CD14-positive monocyte (primary cell): ENCODE measurements at regions of chr14 and their contacts with region 1.

Region 1: GRCh38 chr14:61252369-61253063 is 28.6 kb downstream of the TMEM30B start:
- DNase-seq: peak; percentile 60 to 65 (median 63)
- H3K4me3 ChIP-seq: no peak overlapping the region
- H3K4me3 Mint-ChIP-seq: no peak overlapping the region
- H3K27ac ChIP-seq: no peak overlapping the region
- H3K27ac Mint-ChIP-seq: no peak overlapping the region
- H3K4me1 ChIP-seq: peaks cover 12 to 13% of the 10 kb centered on the region in 2 donors
- H3K4me1 Mint-ChIP-seq: peaks cover 22% of the 10 kb centered on the region
- H3K27me3 ChIP-seq: no peaks in the 10 kb centered on the region
- H3K27me3 Mint-ChIP-seq: peaks cover 2 to 11% (median 6%) of the 10 kb centered on the region in 3 donors
- CTCF ChIP-seq: peak; percentile 80

Region 2: GRCh38 chr14:60349663-60350365 is 902.7 kb before region 1 on chr14:
- intact Hi-C with region 1: loop called (anchors 5 to 10 kb)
- DNase-seq: peak in 2 of 3 donors; percentile 6 to 25
- H3K4me3 ChIP-seq: no peak overlapping the region
- H3K4me3 Mint-ChIP-seq: no peak overlapping the region
- H3K27ac ChIP-seq: no peak overlapping the region
- H3K27ac Mint-ChIP-seq: peak overlapping the region in 1 of 7 donors; percentile 23
- H3K4me1 ChIP-seq: no peaks in the 10 kb centered on the region
- H3K4me1 Mint-ChIP-seq: no peaks in the 10 kb centered on the region
- H3K27me3 ChIP-seq: no peaks in the 10 kb centered on the region
- H3K27me3 Mint-ChIP-seq: peaks cover 6 to 7% (median 6%) of the 10 kb centered on the region in 3 donors
- CTCF ChIP-seq: peak; percentile 73

Region 3: GRCh38 chr14:60622917-60623257 is 629.6 kb before region 1 on chr14:
- intact Hi-C with region 1: loop called (anchors 2 to 5 kb)
- DNase-seq: no peak
- H3K4me3 ChIP-seq: no peak overlapping the region
- H3K4me3 Mint-ChIP-seq: no peak overlapping the region
- H3K27ac ChIP-seq: no peak overlapping the region
- H3K27ac Mint-ChIP-seq: no peak overlapping the region
- H3K4me1 ChIP-seq: peaks cover 4% of the 10 kb centered on the region in 2 donors
- H3K4me1 Mint-ChIP-seq: peaks cover 5% of the 10 kb centered on the region
- H3K27me3 ChIP-seq: peaks cover 26 to 28% of the 10 kb centered on the region in 2 donors
- H3K27me3 Mint-ChIP-seq: peaks cover 31 to 55% (median 34%) of the 10 kb centered on the region in 3 donors
- CTCF ChIP-seq: no peak

Region 4: DNA sequence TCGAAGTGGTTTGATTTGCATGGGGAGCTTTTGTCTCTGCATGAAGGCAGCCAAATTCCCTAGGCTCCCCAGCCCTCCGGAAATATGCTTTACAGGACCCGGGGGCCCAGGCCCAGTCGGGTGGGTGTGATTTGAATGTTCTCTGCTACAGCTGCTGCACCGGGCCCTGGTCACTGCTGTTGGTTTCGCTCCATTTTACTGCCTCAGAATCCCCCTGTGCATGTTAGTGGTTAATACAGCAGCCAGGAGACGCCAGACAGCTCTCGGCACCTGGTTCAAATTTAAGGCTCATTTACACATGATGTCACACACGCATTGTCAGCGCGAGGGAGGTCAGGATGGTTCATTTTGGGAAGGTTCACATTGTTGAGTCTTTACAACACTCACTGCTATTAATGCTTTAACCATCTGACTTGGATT is 171.9 kb before region 1 on chr14:
- intact Hi-C with region 1: no loop called
- DNase-seq: no peak
- H3K4me3 ChIP-seq: no peak overlapping the region
- H3K4me3 Mint-ChIP-seq: no peak overlapping the region
- H3K27ac ChIP-seq: no peak overlapping the region
- H3K27ac Mint-ChIP-seq: no peak overlapping the region
- H3K4me1 ChIP-seq: peaks cover 0 to 1% of the 10 kb centered on the region in 2 donors
- H3K4me1 Mint-ChIP-seq: peaks cover 3% of the 10 kb centered on the region
- H3K27me3 ChIP-seq: no peaks in the 10 kb centered on the region
- H3K27me3 Mint-ChIP-seq: no peaks in the 10 kb centered on the region
- CTCF ChIP-seq: no peak